ENCODE measurements at regions of chr18 and their contacts with region 1.

Region 1: GRCh38 chr18:59340817-59341216 is 18.2 kb downstream of the LMAN1 start:
- DNase-seq: no peak
- ATAC-seq: no peak
- H3K4me3 ChIP-seq: no peak overlapping the region
- H3K4me3 Mint-ChIP-seq: peak overlapping the region in 1 of 10 donors; percentile 41
- H3K27ac ChIP-seq: no peak overlapping the region
- H3K27ac Mint-ChIP-seq: peak overlapping the region in 2 of 9 donors; percentile 9 to 32
- H3K4me1 ChIP-seq: no peaks in the 10 kb centered on the region
- H3K4me1 Mint-ChIP-seq: peaks cover 8 to 41% (median 37%) of the 10 kb centered on the region in 7 donors
- H3K27me3 ChIP-seq: no peaks in the 10 kb centered on the region
- H3K27me3 Mint-ChIP-seq: no peaks in the 10 kb centered on the region

Region 2: GRCh38 chr18:59358712-59359575 is 18.1 kb after region 1 on chr18 and contains the start of gene LMAN1:
- CTCF ChIA-PET with region 1: interaction called, 3 read pairs
- POLR2A ChIA-PET with region 1: no interaction called
- intact Hi-C with region 1: loop called in 1 of 2 experiments (anchors 1 kb)
- DNase-seq: peak; percentile 73 to 98 (median 83)
- ATAC-seq: peak; percentile 97
- H3K4me3 ChIP-seq: peak within 1 kb of the TSS; percentile 81
- H3K4me3 Mint-ChIP-seq: peak within 1 kb of the TSS; percentile 88 to 99 (median 96)
- H3K27ac ChIP-seq: peak within 1 kb of the TSS; percentile 86
- H3K27ac Mint-ChIP-seq: peak within 1 kb of the TSS; percentile 90 to 98 (median 93)
- H3K4me1 ChIP-seq: peaks cover 3 to 20% of the 10 kb centered on the region in 2 donors
- H3K4me1 Mint-ChIP-seq: peaks cover 11 to 45% (median 39%) of the 10 kb centered on the region in 7 donors
- H3K27me3 ChIP-seq: no peaks in the 10 kb centered on the region
- H3K27me3 Mint-ChIP-seq: peaks cover 0 to 9% (median 0%) of the 10 kb centered on the region in 5 donors
- total RNA-seq, gene LMAN1: 34.6 to 120 (median 46.3) TPM

Measured in naive thymus-derived CD4-positive, alpha-beta T cell (primary cell).